ENCODE measurements at regions of chr2 and their contacts with region 1.

Region 1: GRCh38 chr2:205545971-205546816 is 136.1 kb upstream of the NRP2 start:
- DNase-seq: no peak
- H3K27ac ChIP-seq: no peak overlapping the region
- CTCF ChIP-seq: no peak

Region 2: DNA sequence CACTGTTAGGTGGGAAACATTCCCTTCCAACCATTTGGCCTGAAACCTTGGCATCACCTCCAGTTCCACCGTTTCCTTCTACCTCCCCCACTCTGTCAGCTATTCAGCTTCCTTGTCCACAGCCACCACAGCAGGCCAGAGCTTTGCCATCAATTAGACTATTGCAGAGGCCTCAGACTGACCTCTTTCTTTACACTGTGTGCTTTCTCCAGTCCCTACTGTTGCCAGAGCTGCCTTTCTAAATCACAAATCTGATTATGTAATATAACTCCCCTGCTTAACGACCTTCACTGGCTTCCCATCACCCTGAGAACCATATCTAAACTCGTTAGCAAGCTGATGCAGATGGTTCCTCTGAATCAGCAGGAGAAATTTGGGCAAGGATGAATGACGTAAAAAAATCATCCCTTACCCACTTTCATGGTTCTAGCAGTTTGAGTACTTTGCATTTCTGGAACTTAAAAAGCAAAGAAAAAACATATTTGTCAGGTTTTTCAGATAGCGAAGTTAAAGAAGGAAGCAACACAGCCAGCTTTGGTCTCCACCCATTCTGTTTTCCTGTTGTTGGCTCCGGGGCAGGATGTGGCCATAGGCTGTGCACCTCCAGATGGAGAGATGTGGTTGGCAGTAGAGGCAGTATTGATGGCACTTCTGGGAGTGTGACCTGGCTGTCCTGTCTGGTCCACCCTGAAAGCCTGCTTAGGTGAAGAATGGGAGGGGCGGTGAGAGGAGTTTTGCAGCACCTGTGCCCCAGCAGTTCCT is 578.8 kb before region 1 on chr2:
- CTCF ChIA-PET with region 1: interaction called, 10 read pairs
- POLR2A ChIA-PET with region 1: no interaction called
- DNase-seq: no peak
- H3K27ac ChIP-seq: no peak overlapping the region
- CTCF ChIP-seq: no peak

Region 3: GRCh38 chr2:205556841-205557539 is 10.8 kb after region 1 on chr2:
- CTCF ChIA-PET with region 1: no interaction called
- POLR2A ChIA-PET with region 1: no interaction called
- DNase-seq: no peak
- H3K27ac ChIP-seq: no peak overlapping the region
- CTCF ChIP-seq: no peak

Region 4: DNA sequence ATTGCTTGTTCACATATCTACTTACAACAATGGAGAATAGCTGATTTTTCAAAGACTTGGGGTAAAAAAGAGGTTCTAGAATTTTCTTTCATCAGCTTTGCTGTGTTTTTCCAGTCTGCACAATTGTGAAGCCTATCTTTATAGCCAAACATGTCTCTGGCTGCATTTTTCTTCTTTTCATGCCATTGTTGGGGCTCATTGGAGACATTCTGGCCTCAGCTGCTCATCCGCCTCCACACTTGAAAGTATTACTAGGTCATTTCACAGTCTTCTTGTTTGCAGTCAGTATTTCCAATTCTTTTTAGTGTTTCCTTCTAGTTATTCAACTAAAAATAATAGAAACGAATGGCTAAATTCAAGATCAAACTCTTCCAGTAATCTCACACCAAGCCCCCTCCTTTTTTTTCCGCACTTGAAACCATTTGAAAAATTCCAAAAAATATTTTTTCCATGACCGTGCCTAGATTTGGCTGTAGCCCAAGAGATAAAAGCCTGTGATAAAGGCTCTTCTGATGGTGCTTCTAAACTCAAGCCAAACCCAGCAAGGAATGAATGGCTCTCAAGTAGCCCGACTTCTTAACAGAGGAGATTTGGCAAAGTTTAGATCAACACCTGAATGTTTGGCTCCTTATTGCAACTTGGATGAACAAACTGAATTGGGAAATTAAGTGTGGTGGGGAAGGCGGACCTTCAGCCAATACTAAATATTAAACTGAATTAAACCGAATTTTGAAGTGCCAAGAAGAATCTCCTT is 239.5 kb after region 1 on chr2:
- CTCF ChIA-PET with region 1: no interaction called
- POLR2A ChIA-PET with region 1: interaction called, 11 read pairs
- DNase-seq: no peak
- H3K27ac ChIP-seq: no peak overlapping the region
- CTCF ChIP-seq: no peak

Measured in RWPE1 (cell line).